Panc1 (cell line): ENCODE measurements at regions of chr1 and their contacts with region 1.

Region 1: GRCh38 chr1:28631713-28632112 is 11.2 kb downstream of the TAF12 start:
- DNase-seq: no peak
- ATAC-seq: no peak
- H3K4me3 ChIP-seq: no peak overlapping the region
- H3K27ac ChIP-seq: no peak overlapping the region
- H3K4me1 ChIP-seq: no peaks in the 10 kb centered on the region
- H3K27me3 ChIP-seq: no peaks in the 10 kb centered on the region
- CTCF ChIP-seq: no peak

Region 2: GRCh38 chr1:28526889-28527288 is 104.8 kb before region 1 on chr1:
- CTCF ChIA-PET with region 1: no interaction called
- POLR2A ChIA-PET with region 1: interaction called, 16 read pairs
- in situ Hi-C with region 1: no loop called
- intact Hi-C with region 1: no loop called
- DNase-seq: no peak
- ATAC-seq: no peak
- H3K4me3 ChIP-seq: no peak overlapping the region
- H3K27ac ChIP-seq: no peak overlapping the region
- H3K4me1 ChIP-seq: no peaks in the 10 kb centered on the region
- H3K27me3 ChIP-seq: no peaks in the 10 kb centered on the region
- CTCF ChIP-seq: no peak

Region 3: DNA sequence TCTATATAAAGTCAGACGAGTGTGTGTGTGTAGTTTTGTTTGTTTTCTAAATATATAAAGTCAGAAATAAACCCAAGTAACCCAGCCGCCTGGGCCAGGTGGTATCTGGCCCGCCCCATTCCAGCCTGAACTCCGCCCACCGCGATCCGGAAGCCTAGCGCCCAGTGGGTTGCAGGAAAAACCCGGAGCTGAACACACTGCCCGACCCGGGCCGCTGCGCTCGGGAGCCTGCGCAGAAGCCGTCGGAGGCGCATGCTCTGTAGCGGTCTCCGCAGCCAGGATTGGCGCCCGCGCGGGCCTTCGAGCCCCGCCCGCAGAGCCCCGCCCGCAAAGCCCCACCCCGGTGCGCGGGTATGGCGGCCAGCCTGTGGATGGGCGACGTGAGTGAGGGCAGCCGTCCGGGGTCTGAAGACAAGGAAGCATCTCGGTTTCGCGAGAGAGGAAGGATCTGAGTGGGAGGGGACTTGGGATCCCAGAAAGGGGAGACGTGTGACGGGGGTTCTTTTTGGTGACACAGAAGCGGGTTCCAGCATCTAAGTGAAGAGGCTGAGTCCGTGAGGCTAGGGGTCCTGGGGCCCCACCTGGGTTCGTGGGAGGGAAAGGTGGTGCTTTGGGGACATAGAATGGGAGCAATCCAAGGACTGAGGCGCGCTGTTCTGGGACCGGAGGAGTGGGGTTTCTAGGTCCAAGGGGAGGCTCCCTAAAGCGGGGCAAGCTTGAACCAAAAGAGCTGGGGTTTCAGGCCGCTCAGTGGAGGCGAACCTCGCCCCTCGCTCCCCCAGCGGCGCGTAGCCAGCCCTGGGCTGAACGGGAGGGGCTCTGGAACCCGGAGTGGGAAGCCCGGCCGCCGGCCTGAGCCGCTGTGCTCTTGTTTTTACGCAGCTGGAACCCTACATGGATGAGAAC is 78.7 kb before region 1 on chr1 and contains the start of gene TRNAU1AP:
- CTCF ChIA-PET with region 1: no interaction called
- POLR2A ChIA-PET with region 1: no interaction called
- in situ Hi-C with region 1: no loop called
- intact Hi-C with region 1: no loop called
- DNase-seq: peak; percentile 88
- ATAC-seq: peak; percentile 98
- H3K4me3 ChIP-seq: peak within 1 kb of the TSS; percentile 90 to 98
- H3K27ac ChIP-seq: peak within 1 kb of the TSS; percentile 97
- H3K4me1 ChIP-seq: no peaks in the 10 kb centered on the region
- H3K27me3 ChIP-seq: no peaks in the 10 kb centered on the region
- CTCF ChIP-seq: no peak
- total RNA-seq, gene TRNAU1AP: 39.1 TPM

Region 4: GRCh38 chr1:29579821-29580425 is 948.2 kb after region 1 on chr1:
- CTCF ChIA-PET with region 1: no interaction called
- POLR2A ChIA-PET with region 1: no interaction called
- in situ Hi-C with region 1: no loop called
- intact Hi-C with region 1: no loop called
- DNase-seq: no peak
- ATAC-seq: no peak
- H3K4me3 ChIP-seq: no peak overlapping the region
- H3K27ac ChIP-seq: no peak overlapping the region
- H3K4me1 ChIP-seq: no peaks in the 10 kb centered on the region
- H3K27me3 ChIP-seq: no peaks in the 10 kb centered on the region
- CTCF ChIP-seq: no peak